ENCODE measurements at regions of chr3 and their contacts with region 1.

Region 1: DNA sequence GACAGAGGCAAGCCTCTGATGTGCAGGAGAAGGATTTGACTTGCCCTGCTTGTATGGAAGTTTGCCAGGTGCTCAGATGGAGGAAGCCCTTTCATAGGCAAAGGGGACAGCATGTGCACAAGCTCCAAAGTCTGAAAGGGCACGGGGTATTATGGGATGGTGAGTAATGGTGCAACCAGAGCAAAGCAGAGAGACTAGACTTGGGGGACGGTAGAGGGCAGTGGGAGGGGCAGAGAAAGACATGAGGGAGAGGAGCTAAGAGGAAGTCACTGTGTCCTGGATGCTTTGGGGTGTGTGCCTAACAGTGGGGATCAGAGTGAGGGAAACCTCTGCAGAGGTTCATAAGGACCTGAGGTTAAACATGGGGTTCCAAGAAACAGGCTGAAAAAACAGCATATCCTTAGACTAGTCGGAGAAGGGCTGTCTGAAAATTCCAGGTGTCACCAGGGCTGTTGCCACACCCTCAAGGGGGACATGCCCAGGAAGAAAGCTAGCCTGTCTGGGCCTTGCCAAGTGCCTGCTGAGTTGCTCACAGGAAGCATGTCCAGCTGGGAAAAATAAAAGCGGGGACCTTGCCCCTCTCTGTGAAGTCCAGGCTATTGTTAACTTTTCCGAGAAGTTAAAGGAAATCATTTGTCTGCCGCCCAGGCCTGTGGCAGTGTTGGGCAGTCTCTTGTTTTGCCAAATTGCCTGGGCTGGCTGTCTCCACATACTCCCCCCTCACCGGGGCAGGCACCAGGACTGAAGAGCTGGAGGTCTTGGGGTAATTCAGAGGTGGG is 47.1 kb downstream of the HRH1 start:
- DNase-seq: peak; percentile 97
- H3K4me3 ChIP-seq: no peak overlapping the region
- H3K27ac ChIP-seq: peak overlapping the region; percentile 99
- H3K4me1 ChIP-seq: peaks cover 75% of the 10 kb centered on the region
- H3K27me3 ChIP-seq: no peaks in the 10 kb centered on the region
- CTCF ChIP-seq: peak in 1 of 2 donors; percentile 7
- POLR2A ChIP-seq: peak; percentile 75

Region 2: DNA sequence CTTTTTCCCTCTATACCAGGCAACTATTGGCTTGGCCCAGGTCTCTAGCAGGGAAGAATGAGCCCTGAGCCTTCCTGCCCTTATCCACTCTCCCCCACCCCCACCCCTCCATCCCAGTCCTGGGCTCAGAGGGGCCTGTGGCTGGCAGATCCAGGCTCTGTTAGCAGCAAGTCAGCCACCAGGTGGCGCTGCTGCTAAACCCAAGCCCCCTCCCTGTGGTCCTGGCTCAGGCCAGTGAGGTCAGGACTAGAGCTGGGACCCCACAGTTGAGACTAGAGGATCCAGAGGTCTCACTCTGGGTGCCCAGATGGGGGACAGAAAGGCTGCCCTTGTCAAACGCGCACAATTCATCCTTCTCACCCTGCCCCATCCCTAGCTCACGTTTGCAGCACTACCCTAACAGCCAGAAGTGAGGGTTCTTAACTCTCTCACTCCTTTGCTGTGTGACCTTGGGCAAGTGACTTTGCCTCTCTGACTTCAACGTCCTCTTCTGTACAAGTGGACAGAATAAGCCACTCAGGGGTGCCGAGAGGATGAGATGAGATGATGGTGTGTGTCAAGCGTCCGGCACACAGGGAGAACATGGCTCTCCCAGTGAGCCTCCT is 255.7 kb before region 1 on chr3:
- CTCF ChIA-PET with region 1: no interaction called
- POLR2A ChIA-PET with region 1: no interaction called
- dilution Hi-C with region 1: no loop called
- intact Hi-C with region 1: loop called (anchors 10 kb)
- DNase-seq: peak; percentile 43
- H3K4me3 ChIP-seq: no peak overlapping the region
- H3K27ac ChIP-seq: no peak overlapping the region
- H3K4me1 ChIP-seq: no peaks in the 10 kb centered on the region
- H3K27me3 ChIP-seq: no peaks in the 10 kb centered on the region
- CTCF ChIP-seq: peak; percentile 71 to 91
- POLR2A ChIP-seq: no peak

Region 3: GRCh38 chr3:11096266-11097135 is 104.9 kb before region 1 on chr3:
- CTCF ChIA-PET with region 1: no interaction called
- POLR2A ChIA-PET with region 1: no interaction called
- dilution Hi-C with region 1: no loop called
- intact Hi-C with region 1: loop called (anchors 10 kb)
- DNase-seq: peak; percentile 77
- H3K4me3 ChIP-seq: peak overlapping the region in 2 of 3 experiments; percentile 3 to 12
- H3K27ac ChIP-seq: no peak overlapping the region
- H3K4me1 ChIP-seq: peaks cover 9% of the 10 kb centered on the region
- H3K27me3 ChIP-seq: no peaks in the 10 kb centered on the region
- CTCF ChIP-seq: no peak
- POLR2A ChIP-seq: no peak

Region 4: GRCh38 chr3:11185564-11186317 is 15.7 kb before region 1 on chr3:
- CTCF ChIA-PET with region 1: interaction called, 19 read pairs
- POLR2A ChIA-PET with region 1: interaction called, 23 read pairs
- dilution Hi-C with region 1: no loop called
- intact Hi-C with region 1: loop called (anchors 1 kb)
- DNase-seq: peak; percentile 97
- H3K4me3 ChIP-seq: no peak overlapping the region
- H3K27ac ChIP-seq: peak overlapping the region; percentile 64
- H3K4me1 ChIP-seq: peaks cover 45% of the 10 kb centered on the region
- H3K27me3 ChIP-seq: no peaks in the 10 kb centered on the region
- CTCF ChIP-seq: no peak
- POLR2A ChIP-seq: no peak

Region 5: GRCh38 chr3:11221818-11222415 is 20.5 kb after region 1 on chr3:
- CTCF ChIA-PET with region 1: interaction called, 7 read pairs
- POLR2A ChIA-PET with region 1: interaction called, 11 read pairs
- dilution Hi-C with region 1: no loop called
- intact Hi-C with region 1: loop called (anchors 1 kb)
- DNase-seq: no peak
- H3K4me3 ChIP-seq: no peak overlapping the region
- H3K27ac ChIP-seq: no peak overlapping the region
- H3K4me1 ChIP-seq: peaks cover 40% of the 10 kb centered on the region
- H3K27me3 ChIP-seq: no peaks in the 10 kb centered on the region
- CTCF ChIP-seq: peak; percentile 5 to 11
- POLR2A ChIP-seq: no peak

Region 6: GRCh38 chr3:11271986-11272904 is 70.8 kb after region 1 on chr3 and contains the start of gene ATG7:
- CTCF ChIA-PET with region 1: no interaction called
- POLR2A ChIA-PET with region 1: interaction called, 3 read pairs
- dilution Hi-C with region 1: no loop called
- intact Hi-C with region 1: loop called (anchors 1 kb)
- DNase-seq: peak; percentile 98
- H3K4me3 ChIP-seq: peak within 1 kb of the TSS; percentile 76 to 89 (median 88)
- H3K27ac ChIP-seq: peak within 1 kb of the TSS; percentile 89
- H3K4me1 ChIP-seq: peaks cover 15% of the 10 kb centered on the region
- H3K27me3 ChIP-seq: no peaks in the 10 kb centered on the region
- CTCF ChIP-seq: no peak
- POLR2A ChIP-seq: peak; percentile 89
- total RNA-seq, gene ATG7: 48.3 and 50.4 TPM in 2 replicates

Region 7: GRCh38 chr3:11335056-11335608 is 133.7 kb after region 1 on chr3:
- CTCF ChIA-PET with region 1: interaction called, 9 read pairs
- POLR2A ChIA-PET with region 1: interaction called, 6 read pairs
- dilution Hi-C with region 1: no loop called
- intact Hi-C with region 1: loop called (anchors 1 kb)
- DNase-seq: peak; percentile 81
- H3K4me3 ChIP-seq: no peak overlapping the region
- H3K27ac ChIP-seq: no peak overlapping the region
- H3K4me1 ChIP-seq: peaks cover 15% of the 10 kb centered on the region
- H3K27me3 ChIP-seq: no peaks in the 10 kb centered on the region
- CTCF ChIP-seq: peak; percentile 41 to 56
- POLR2A ChIP-seq: no peak

Region 8: DNA sequence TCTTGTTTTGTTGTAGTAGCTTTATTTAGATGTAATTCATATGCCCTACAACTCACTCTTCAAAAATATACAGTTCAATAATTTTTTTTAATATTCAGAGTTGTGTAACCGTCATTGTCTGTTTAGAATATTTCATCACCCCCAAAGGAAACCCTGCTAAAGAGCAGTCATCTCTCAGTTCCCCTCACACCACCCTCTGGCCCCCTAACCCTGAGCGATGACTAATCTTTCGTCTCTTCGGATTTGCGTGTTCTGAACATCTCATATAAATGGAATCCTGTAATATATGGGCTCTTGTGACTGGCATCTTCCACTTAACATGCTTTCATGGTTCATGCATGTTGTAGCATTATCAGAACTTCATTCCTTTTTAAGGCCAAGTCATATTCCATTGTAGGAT is 254.5 kb after region 1 on chr3:
- CTCF ChIA-PET with region 1: no interaction called
- POLR2A ChIA-PET with region 1: no interaction called
- dilution Hi-C with region 1: no loop called
- intact Hi-C with region 1: no loop called
- DNase-seq: peak; percentile 24
- H3K4me3 ChIP-seq: no peak overlapping the region
- H3K27ac ChIP-seq: no peak overlapping the region
- H3K4me1 ChIP-seq: peaks cover 15% of the 10 kb centered on the region
- H3K27me3 ChIP-seq: no peaks in the 10 kb centered on the region
- CTCF ChIP-seq: no peak
- POLR2A ChIP-seq: no peak

Measured in endothelial cell of umbilical vein (primary cell).